ENCODE measurements at regions of chr18 and their contacts with region 1.

Region 1: DNA sequence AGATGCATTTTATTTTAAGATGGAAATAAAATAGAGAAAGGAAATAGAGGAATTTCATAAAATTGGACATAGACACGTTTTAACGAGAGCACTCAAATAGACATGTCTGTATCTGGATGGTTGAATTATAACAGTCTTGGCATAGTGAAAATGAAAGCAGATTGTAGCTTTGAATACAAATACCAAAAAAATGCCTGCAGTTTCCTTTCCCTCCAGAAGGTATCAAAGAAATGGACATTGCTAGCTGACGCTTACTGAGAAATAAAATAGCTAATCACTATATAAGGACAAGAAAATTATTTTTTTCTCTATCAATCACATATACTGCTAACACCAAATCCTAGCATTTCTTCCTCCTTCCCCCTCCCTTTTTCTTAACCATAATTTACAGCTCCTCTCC is 11.4 kb upstream of the MAPRE2 start:
- DNase-seq: no peak
- ATAC-seq: peak in 1 of 2 donors; percentile 59

Region 2: GRCh38 chr18:35143622-35144596 is 114.1 kb after region 1 on chr18:
- intact Hi-C with region 1: loop called (anchors 5 kb)
- DNase-seq: peak; percentile 57
- ATAC-seq: peak; percentile 93 to 96

Region 3: DNA sequence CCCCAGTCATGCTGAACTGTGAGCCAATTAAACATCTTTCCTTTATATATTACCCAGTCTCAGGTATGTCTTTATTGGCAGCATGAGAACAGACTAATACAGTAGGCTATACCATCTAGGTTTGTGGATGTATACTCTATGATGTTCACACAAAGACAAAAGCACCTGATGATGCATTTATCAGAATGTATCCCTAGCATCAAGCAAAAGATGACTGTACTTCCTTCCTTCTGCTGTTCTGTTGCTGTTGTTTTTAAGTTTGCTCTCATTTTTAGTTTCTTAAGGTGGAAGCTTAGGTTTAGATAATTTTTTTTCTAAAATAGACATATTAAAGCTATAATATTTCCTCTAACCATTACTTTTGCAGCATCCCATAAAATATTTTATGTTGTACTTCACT is 247.9 kb after region 1 on chr18:
- intact Hi-C with region 1: no loop called
- DNase-seq: no peak
- ATAC-seq: no peak

Measured in left cardiac atrium (tissue), 4 donors.